ENCODE measurements at regions of chr19 and their contacts with region 1.

Region 1: DNA sequence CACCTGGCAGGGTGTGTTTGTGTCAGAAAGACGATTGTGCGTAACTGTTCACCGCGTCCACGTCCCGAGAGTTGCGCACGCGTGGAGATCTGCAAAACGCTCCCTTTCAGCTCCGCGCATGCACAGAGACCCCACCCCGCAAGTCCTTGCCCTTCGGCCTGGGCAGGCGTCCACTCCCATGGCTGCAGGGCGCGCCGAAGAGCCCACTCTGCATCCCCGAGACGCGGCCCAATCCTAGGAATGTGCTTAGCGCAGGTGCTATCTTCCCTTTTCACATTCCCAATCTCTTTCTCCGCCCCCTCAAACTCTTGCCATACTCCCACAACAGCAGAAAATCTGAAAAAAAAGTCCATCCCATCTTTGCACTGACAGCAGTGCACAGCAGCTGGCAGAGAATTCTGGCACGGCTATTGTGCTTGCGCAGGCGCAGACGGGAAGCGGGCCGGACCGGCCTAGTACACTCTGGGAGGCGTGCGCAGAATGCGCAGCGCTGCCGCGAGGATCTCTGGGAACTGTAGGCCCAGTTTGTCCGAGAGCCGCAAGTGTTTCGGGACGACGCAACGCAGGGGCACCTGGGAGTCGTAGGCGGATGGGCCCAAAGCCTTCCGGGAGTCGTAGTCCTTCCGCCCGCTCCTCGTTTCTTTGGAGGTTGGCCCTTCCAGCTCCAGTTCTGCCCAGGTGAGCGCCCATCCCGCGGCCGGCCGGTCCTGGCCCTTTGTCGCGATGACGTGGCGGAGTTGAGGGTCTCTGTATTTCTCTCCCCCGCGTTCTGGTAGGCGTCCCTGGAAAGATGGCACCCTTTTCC is 23.1 kb downstream of the ZNF175 start:
- DNase-seq: peak; percentile 97
- ATAC-seq: peak; percentile 99 to 100
- H3K4me3 ChIP-seq: peak overlapping the region; percentile 66 to 80 (median 73)
- H3K27ac ChIP-seq: peak overlapping the region; percentile 32 to 71 (median 52)
- H3K4me1 ChIP-seq: peaks cover 8 to 14% of the 10 kb centered on the region in 2 donors
- H3K27me3 ChIP-seq: peaks cover 5 to 9% (median 8%) of the 10 kb centered on the region in 3 donors
- CTCF ChIP-seq: no peak
- POLR2A ChIP-seq: no peak

Region 2: GRCh38 chr19:51108066-51108804 is 485.9 kb before region 1 on chr19 and contains the start of gene CTU1:
- in situ Hi-C with region 1: loop called in 3 of 4 experiments (anchors 5 to 25 kb)
- intact Hi-C with region 1: loop called (anchors 1 kb)
- DNase-seq: peak; percentile 98 to 99
- ATAC-seq: peak; percentile 100
- H3K4me3 ChIP-seq: peak within 1 kb of the TSS; percentile 65 to 87 (median 76)
- H3K27ac ChIP-seq: peak within 1 kb of the TSS; percentile 68 to 77 (median 74)
- H3K4me1 ChIP-seq: peaks cover 8 to 14% of the 10 kb centered on the region in 2 donors
- H3K27me3 ChIP-seq: no peaks in the 10 kb centered on the region
- CTCF ChIP-seq: peak in 2 of 5 experiments; percentile 24 to 26
- POLR2A ChIP-seq: peak; percentile 34 to 63
- total RNA-seq, gene CTU1: 5.8 to 11.9 (median 9.3) TPM

Region 3: DNA sequence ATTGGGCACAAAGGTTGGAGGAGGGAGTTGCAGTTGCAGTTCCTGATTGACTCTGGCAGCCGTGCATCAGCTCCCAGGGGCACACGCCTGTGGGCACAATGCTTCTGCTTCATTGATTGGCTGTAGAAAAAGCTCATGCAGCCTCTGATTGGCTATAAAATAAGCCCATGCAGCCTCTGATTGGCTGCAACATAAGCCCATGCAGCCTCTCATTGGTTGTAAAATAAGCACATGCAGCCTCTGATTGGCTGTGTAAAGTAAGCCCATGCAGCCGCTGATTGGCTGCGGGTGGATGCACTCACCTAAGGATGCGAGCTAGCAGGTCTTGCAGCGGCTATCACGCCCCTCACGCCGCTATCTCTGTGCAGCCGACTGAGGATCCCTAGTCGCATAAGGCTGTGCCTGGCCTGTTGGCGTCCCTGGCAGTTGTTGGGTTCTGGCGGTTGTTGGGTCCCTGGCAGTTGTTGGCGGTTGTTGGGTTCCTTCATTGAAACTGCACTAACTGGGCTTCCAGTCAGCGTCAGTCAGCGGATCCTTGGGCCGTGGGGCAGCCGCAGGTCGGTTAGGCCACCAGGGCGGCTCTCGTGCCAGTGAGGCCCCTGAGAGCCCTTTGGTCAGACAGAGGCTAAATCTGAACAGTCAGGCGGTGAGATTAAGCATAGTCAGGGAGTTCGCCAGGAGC is 343.2 kb before region 1 on chr19 and contains the start of gene SIGLECL1:
- in situ Hi-C with region 1: no loop called
- intact Hi-C with region 1: no loop called
- DNase-seq: no peak
- ATAC-seq: no peak
- H3K4me3 ChIP-seq: no peak within 1 kb of the TSS
- H3K27ac ChIP-seq: no peak within 1 kb of the TSS
- H3K4me1 ChIP-seq: no peaks in the 10 kb centered on the region
- H3K27me3 ChIP-seq: no peaks in the 10 kb centered on the region
- CTCF ChIP-seq: no peak
- POLR2A ChIP-seq: no peak
- total RNA-seq, gene SIGLECL1: not detected

Region 4: GRCh38 chr19:51338563-51339312 is 255.4 kb before region 1 on chr19:
- in situ Hi-C with region 1: no loop called
- intact Hi-C with region 1: loop called (anchors 1 kb)
- DNase-seq: peak; percentile 36 to 48
- ATAC-seq: peak; percentile 47 to 54
- H3K4me3 ChIP-seq: peak overlapping the region; percentile 49 to 60 (median 55)
- H3K27ac ChIP-seq: peak overlapping the region in 2 of 4 donors; percentile 39 to 59
- H3K4me1 ChIP-seq: peaks cover 4 to 17% of the 10 kb centered on the region in 2 donors
- H3K27me3 ChIP-seq: peaks cover 0 to 9% (median 0%) of the 10 kb centered on the region in 3 donors
- CTCF ChIP-seq: peak; percentile 45 to 92 (median 85)
- POLR2A ChIP-seq: no peak

Region 5: DNA sequence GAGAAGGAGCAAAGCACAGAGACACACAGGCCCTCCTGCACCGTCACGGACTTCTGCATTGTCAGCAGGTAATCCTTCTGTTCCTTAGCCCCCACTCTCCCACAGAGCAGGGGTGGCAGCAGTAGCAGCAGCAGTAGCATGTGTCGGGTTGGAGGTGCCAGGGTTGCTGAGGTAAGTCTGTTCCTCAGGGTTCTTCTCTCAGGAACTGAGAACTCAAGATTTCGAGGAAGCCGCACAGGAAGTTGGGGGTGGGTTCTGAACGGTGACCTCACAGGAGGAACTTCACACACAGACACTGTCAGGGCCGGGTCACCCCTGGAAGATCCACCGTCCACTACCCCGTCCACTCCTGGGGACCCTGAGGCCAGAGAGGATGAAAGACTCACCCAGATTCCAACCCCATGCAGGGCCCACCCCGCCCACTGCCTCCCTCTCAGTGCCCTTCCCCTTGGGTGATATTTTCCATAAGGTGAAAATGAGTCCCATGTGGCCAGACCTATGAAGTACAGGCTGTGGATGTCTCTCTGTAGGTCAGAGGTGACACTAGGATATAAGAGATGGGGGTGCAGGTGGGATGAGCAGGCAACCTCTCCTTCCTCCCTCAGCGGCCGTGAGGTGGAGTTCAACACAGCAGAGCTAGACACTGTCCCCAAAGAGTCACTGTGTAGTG is 92.4 kb before region 1 on chr19 and contains the start of gene SIGLEC12:
- in situ Hi-C with region 1: no loop called
- intact Hi-C with region 1: no loop called
- DNase-seq: peak in 1 of 2 donors; percentile 22
- ATAC-seq: no peak
- H3K4me3 ChIP-seq: no peak within 1 kb of the TSS
- H3K27ac ChIP-seq: no peak within 1 kb of the TSS
- H3K4me1 ChIP-seq: no peaks in the 10 kb centered on the region
- H3K27me3 ChIP-seq: no peaks in the 10 kb centered on the region
- CTCF ChIP-seq: no peak
- POLR2A ChIP-seq: no peak
- total RNA-seq, gene SIGLEC12: not detected

Region 6: GRCh38 chr19:51703575-51704515 is 109.7 kb after region 1 on chr19:
- in situ Hi-C with region 1: no loop called
- intact Hi-C with region 1: loop called (anchors 1 kb)
- DNase-seq: peak; percentile 84 to 87
- ATAC-seq: peak; percentile 88 to 93
- H3K4me3 ChIP-seq: peak overlapping the region; percentile 53 to 64 (median 60)
- H3K27ac ChIP-seq: peak overlapping the region; percentile 73 to 86 (median 79)
- H3K4me1 ChIP-seq: peaks cover 9 to 11% of the 10 kb centered on the region in 2 donors
- H3K27me3 ChIP-seq: no peaks in the 10 kb centered on the region
- CTCF ChIP-seq: peak in 2 of 5 experiments; percentile 43 to 48
- POLR2A ChIP-seq: peak; percentile 54 to 65

Region 7: DNA sequence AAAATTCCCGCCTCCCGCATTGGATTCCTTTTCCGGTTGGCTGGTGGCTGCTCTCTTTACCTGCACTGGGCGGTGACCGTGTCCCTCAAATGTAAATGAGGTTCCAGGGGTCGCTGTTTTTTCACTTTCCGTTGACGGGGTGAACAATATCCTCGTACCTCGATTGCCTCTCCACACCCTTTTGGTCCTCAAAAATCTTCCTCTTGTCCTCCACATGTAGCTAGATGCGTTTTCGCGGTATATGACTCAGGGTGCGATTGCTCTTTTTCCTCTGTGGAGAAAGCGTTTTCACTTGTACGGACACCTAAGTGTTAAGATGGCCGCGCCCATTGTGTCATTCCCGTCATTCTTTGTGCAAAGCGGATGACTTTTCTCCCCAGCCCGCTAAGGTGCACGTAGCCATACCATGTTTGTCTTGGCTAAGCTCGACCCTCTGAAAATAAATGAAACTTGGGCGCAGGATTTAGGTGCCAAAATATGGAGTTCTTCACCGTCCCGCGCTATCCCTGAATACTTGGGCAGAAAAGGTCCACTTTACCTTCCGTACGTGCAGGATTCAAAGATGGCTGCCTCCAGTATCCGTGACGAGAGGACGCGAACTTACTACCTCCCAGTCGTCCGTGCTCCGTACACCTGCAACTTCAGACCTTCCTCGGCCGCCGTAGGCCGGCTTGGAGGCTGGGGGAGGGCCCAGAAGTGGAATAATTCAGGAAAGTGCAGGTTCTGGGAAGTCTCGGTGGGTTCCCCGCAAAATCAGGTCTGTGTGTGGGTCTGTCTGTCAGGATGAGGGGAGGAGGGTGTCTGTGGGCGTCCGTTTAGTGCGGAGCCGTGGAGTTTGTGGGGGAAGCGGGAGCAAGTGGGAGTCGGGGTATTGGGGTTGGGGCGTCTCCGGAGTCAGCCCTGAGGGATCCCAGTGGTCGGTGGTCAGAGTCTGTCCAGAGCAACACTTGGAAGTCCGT is 332.9 kb after region 1 on chr19 and contains the start of gene ZNF613:
- in situ Hi-C with region 1: no loop called
- intact Hi-C with region 1: no loop called
- DNase-seq: peak; percentile 78 to 83
- ATAC-seq: peak; percentile 95
- H3K4me3 ChIP-seq: peak within 1 kb of the TSS; percentile 73 to 95 (median 88)
- H3K27ac ChIP-seq: peak within 1 kb of the TSS; percentile 76 to 91 (median 86)
- H3K4me1 ChIP-seq: peaks cover 5 to 11% of the 10 kb centered on the region in 2 donors
- H3K27me3 ChIP-seq: no peaks in the 10 kb centered on the region
- CTCF ChIP-seq: peak in 2 of 5 experiments; percentile 35
- POLR2A ChIP-seq: no peak
- total RNA-seq, gene ZNF613: 1.3 to 9.4 (median 3.8) TPM

Region 8: GRCh38 chr19:52007806-52008557 is 413.8 kb after region 1 on chr19 and contains the start of gene ZNF615:
- in situ Hi-C with region 1: no loop called
- intact Hi-C with region 1: loop called (anchors 10 kb)
- DNase-seq: peak; percentile 77 to 81
- ATAC-seq: peak; percentile 94 to 98
- H3K4me3 ChIP-seq: peak within 1 kb of the TSS; percentile 82 to 97 (median 88)
- H3K27ac ChIP-seq: peak within 1 kb of the TSS; percentile 75 to 86 (median 82)
- H3K4me1 ChIP-seq: peaks cover 0 to 5% of the 10 kb centered on the region in 2 donors
- H3K27me3 ChIP-seq: no peaks in the 10 kb centered on the region
- CTCF ChIP-seq: no peak
- POLR2A ChIP-seq: peak; percentile 10 to 14
- total RNA-seq, gene ZNF615: 5.6 to 8.9 (median 7.4) TPM

Region 9: GRCh38 chr19:52535771-52536447 is 941.7 kb after region 1 on chr19:
- in situ Hi-C with region 1: no loop called
- intact Hi-C with region 1: no loop called
- DNase-seq: peak; percentile 68 to 79
- ATAC-seq: peak; percentile 69 to 80
- H3K4me3 ChIP-seq: peak overlapping the region; percentile 59 to 74 (median 70)
- H3K27ac ChIP-seq: peak overlapping the region; percentile 69 to 88 (median 82)
- H3K4me1 ChIP-seq: peaks cover 25% of the 10 kb centered on the region in 2 donors
- H3K27me3 ChIP-seq: no peaks in the 10 kb centered on the region
- CTCF ChIP-seq: peak in 2 of 5 experiments; percentile 39 to 47
- POLR2A ChIP-seq: peak; percentile 32 to 44

Measured in gastrocnemius medialis (tissue), 4 donors.